Mammary epithelial cell (primary cell): ENCODE measurements at regions of chr1 and their contacts with region 1.

Region 1: GRCh38 chr1:1109743-1110142 is 6.1 kb downstream of the C1orf159 start:
- DNase-seq: no peak
- H3K4me3 ChIP-seq: no peak overlapping the region
- H3K27ac ChIP-seq: no peak overlapping the region
- H3K4me1 ChIP-seq: no peaks in the 10 kb centered on the region
- H3K27me3 ChIP-seq: no peaks in the 10 kb centered on the region
- CTCF ChIP-seq: no peak

Region 2: GRCh38 chr1:1004780-1005697 is 104.7 kb before region 1 on chr1:
- CTCF ChIA-PET with region 1: no interaction called
- dilution Hi-C with region 1: loop called (anchors 5 kb)
- in situ Hi-C with region 1: no loop called
- intact Hi-C with region 1: loop called (anchors 10 kb)
- DNase-seq: no peak
- H3K4me3 ChIP-seq: no peak overlapping the region
- H3K27ac ChIP-seq: no peak overlapping the region
- H3K4me1 ChIP-seq: peaks cover 9% of the 10 kb centered on the region
- H3K27me3 ChIP-seq: peaks cover 1% of the 10 kb centered on the region
- CTCF ChIP-seq: no peak

Region 3: GRCh38 chr1:1050577-1051052 is 59.1 kb before region 1 on chr1:
- CTCF ChIA-PET with region 1: no interaction called
- dilution Hi-C with region 1: no loop called
- in situ Hi-C with region 1: no loop called
- intact Hi-C with region 1: no loop called
- DNase-seq: no peak
- H3K4me3 ChIP-seq: no peak overlapping the region
- H3K27ac ChIP-seq: no peak overlapping the region
- H3K4me1 ChIP-seq: no peaks in the 10 kb centered on the region
- H3K27me3 ChIP-seq: no peaks in the 10 kb centered on the region
- CTCF ChIP-seq: no peak

Region 4: GRCh38 chr1:1069061-1069708 is 40.6 kb before region 1 on chr1:
- CTCF ChIA-PET with region 1: no interaction called
- dilution Hi-C with region 1: loop called (anchors 5 kb)
- in situ Hi-C with region 1: no loop called
- intact Hi-C with region 1: no loop called
- DNase-seq: peak; percentile 69
- H3K4me3 ChIP-seq: peak overlapping the region in 2 of 3 experiments; percentile 50 to 69
- H3K27ac ChIP-seq: no peak overlapping the region
- H3K4me1 ChIP-seq: peaks cover 25% of the 10 kb centered on the region
- H3K27me3 ChIP-seq: no peaks in the 10 kb centered on the region
- CTCF ChIP-seq: no peak

Region 5: DNA sequence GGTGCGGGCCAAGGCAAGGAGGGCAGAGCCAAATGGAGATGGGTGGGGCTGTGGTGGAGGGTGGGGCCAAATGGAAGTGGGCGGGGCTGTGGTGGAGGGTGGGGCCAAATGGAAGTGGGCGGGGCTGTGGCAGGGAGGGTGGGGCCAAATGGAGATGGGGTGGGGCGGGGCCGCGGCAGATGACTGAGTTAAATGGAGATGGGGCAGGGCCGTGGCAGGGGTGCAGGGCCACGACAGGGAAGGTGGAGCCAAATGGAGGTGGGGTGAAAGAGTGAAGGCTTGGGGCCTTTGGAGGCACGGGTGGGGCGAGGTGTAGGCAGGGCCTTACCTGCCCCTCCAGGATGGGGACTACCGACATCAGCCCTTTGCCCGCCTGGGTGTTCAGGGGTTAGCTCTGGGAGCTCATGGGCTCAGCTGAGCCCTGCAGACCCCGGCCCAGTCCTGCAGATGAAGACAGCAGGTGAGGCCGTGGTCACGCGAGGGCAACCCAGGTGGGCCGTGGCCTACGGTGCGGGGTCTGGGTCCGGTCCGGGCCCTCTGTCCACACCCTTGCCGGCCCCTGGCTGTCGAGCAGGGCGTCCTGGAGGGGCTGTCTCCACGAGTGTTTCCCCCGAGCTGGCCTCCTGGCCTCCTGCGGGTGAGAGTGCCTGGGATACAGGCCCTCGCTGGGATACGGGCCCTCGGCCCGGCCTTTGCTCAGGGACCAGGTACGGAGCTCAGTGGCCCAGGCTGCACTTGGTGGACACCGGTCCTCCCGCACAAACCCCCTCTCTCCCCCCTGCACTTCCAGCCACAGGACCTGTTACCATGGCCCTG is 17.9 kb before region 1 on chr1:
- CTCF ChIA-PET with region 1: no interaction called
- dilution Hi-C with region 1: no loop called
- in situ Hi-C with region 1: no loop called
- intact Hi-C with region 1: no loop called
- DNase-seq: no peak
- H3K4me3 ChIP-seq: no peak overlapping the region
- H3K27ac ChIP-seq: no peak overlapping the region
- H3K4me1 ChIP-seq: no peaks in the 10 kb centered on the region
- H3K27me3 ChIP-seq: no peaks in the 10 kb centered on the region
- CTCF ChIP-seq: no peak

Region 6: DNA sequence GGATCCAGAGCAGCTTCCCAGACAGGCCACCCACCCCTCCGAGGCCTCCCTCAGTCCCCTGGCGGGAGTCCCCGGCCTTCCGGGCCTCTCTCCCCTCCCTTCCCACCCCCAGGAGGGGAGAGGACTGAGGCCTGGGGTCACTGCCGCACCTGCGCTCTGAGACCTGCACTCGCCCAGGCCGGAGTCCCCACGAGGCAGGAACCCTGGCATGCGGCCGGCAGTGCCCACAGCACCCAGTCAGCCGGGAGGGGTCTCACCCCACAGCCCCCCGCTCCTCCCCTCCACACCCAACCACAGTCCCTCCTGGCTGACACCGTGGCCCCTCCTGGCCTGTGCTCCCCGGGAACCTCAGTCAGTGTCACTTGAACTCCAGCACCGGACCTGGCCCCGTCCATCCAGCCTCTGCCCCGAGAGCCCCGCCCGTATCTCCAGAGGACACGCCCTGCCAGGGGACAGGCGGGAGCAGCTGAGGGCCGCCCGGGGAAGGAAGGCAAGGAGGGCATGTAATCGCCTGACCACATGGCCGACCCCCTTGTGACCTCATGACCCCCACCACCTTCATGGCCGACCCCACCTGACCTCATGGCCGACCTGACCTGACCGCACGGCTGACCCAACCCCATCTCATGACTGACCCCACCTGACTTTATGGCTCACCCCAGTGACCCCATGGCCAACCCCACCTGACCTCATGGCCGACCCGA is 35.3 kb after region 1 on chr1:
- CTCF ChIA-PET with region 1: no interaction called
- dilution Hi-C with region 1: loop called (anchors 5 kb)
- in situ Hi-C with region 1: no loop called
- intact Hi-C with region 1: no loop called
- DNase-seq: no peak
- H3K4me3 ChIP-seq: no peak overlapping the region
- H3K27ac ChIP-seq: no peak overlapping the region
- H3K4me1 ChIP-seq: peaks cover 5% of the 10 kb centered on the region
- H3K27me3 ChIP-seq: no peaks in the 10 kb centered on the region
- CTCF ChIP-seq: no peak

Region 7: DNA sequence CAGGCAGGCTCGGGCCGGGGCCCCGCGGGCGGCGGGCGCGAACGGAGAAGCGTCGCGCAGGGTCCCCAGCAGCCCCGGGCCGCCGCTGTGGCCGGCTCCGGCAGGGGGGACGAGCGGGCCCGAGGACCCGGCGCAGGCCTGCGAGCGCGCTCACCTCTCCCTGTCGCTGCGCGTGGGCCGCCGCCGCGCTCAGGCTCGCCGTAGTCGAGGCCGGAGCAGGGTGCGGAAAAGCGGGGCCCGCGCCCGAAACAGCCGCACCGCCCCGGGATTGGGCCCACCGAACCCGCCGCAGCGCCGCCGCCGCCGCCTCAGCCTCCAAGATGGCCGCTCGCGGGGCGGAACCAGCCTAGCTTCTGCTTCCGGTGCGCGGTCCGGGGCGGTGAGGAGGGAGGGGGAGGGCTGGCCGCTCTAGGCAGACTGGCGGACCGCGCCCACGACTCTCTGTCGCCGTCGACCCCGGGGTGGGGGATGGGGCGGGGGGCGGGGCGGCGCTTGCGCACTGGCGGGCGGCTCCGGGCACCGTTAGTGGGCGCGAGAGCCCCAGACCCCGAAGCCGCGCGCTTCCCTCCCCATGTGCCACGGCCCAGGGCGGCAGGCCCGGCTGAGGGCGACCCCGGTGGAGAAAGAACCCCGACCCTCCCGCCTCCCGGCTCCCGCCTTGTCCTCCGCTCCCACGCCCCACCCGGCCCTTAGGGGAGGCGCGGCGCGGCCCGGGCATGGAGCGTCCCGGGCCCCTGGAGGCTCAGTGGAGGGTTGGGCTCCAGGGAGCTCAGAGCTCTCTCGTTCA is 164.0 kb after region 1 on chr1 and contains the start of gene UBE2J2:
- CTCF ChIA-PET with region 1: no interaction called
- dilution Hi-C with region 1: loop called (anchors 5 kb)
- in situ Hi-C with region 1: no loop called
- intact Hi-C with region 1: no loop called
- DNase-seq: peak; percentile 74
- H3K4me3 ChIP-seq: peak within 1 kb of the TSS; percentile 59 to 87 (median 80)
- H3K27ac ChIP-seq: peak within 1 kb of the TSS; percentile 46
- H3K4me1 ChIP-seq: peaks cover 31% of the 10 kb centered on the region
- H3K27me3 ChIP-seq: no peaks in the 10 kb centered on the region
- CTCF ChIP-seq: no peak
- total RNA-seq, gene UBE2J2: 36.7 to 59.7 TPM

Region 8: GRCh38 chr1:1307908-1308755 is 198.4 kb after region 1 on chr1 and contains the starts of genes ACAP3 and PUSL1:
- CTCF ChIA-PET with region 1: no interaction called
- dilution Hi-C with region 1: loop called (anchors 5 kb)
- in situ Hi-C with region 1: no loop called
- intact Hi-C with region 1: no loop called
- DNase-seq: peak; percentile 94
- H3K4me3 ChIP-seq: peak within 1 kb of the TSS; percentile 77 to 85 (median 83)
- H3K27ac ChIP-seq: peak within 1 kb of the TSS; percentile 40
- H3K4me1 ChIP-seq: peaks cover 59% of the 10 kb centered on the region
- H3K27me3 ChIP-seq: no peaks in the 10 kb centered on the region
- CTCF ChIP-seq: no peak
- total RNA-seq, gene ACAP3: 16.7 to 32.3 TPM
- total RNA-seq, gene PUSL1: 21.5 to 23.6 TPM